Psoas muscle (tissue), 8 donors: ENCODE measurements at regions of chr4 and their contacts with region 1.

Region 1: GRCh38 chr4:113781439-113782040 is 20.0 kb upstream of the CAMK2D start:
- DNase-seq: no peak
- ATAC-seq: peak in 1 of 4 donors; percentile 49
- H3K4me3 ChIP-seq: no peak overlapping the region
- H3K27ac ChIP-seq: no peak overlapping the region
- H3K4me1 ChIP-seq: no peaks in the 10 kb centered on the region
- H3K27me3 ChIP-seq: no peaks in the 10 kb centered on the region
- CTCF ChIP-seq: peak; percentile 74

Region 2: DNA sequence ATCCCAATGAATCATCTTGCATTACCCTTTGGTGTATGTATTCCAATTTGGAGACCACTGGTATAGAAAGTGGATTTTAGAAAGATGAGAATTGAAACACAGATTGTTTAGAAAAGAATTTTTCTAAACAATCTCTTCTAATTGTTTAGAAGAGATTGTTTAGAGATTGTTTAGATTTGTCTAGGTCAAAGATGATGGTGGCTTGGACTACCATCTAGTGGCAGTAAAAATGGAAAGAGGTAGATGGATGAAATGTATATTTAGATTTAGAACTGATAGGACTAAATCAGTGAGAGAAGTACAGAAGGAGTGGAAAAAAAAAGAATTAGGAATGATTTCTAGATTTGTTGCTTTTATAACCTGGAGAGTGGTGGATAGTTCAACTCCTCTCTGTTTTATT is 127.3 kb after region 1 on chr4:
- intact Hi-C with region 1: loop called in 1 of 2 experiments (anchors 5 kb)
- DNase-seq: no peak
- ATAC-seq: no peak
- H3K4me3 ChIP-seq: no peak overlapping the region
- H3K27ac ChIP-seq: no peak overlapping the region
- H3K4me1 ChIP-seq: no peaks in the 10 kb centered on the region
- H3K27me3 ChIP-seq: no peaks in the 10 kb centered on the region
- CTCF ChIP-seq: peak; percentile 26

Region 3: GRCh38 chr4:114180481-114180880 is 398.9 kb after region 1 on chr4:
- intact Hi-C with region 1: loop called in 1 of 2 experiments (anchors 10 kb)
- DNase-seq: no peak
- ATAC-seq: peak in 2 of 4 donors; percentile 33 to 57
- H3K4me3 ChIP-seq: no peak overlapping the region
- H3K27ac ChIP-seq: no peak overlapping the region
- H3K4me1 ChIP-seq: no peaks in the 10 kb centered on the region
- H3K27me3 ChIP-seq: no peaks in the 10 kb centered on the region
- CTCF ChIP-seq: peak; percentile 29

Region 4: GRCh38 chr4:114839986-114840385 is 1058.4 kb after region 1 on chr4:
- intact Hi-C with region 1: no loop called
- DNase-seq: no peak
- ATAC-seq: no peak
- H3K4me3 ChIP-seq: no peak overlapping the region
- H3K27ac ChIP-seq: no peak overlapping the region
- H3K4me1 ChIP-seq: no peaks in the 10 kb centered on the region
- H3K27me3 ChIP-seq: peaks cover 0 to 2% (median 0%) of the 10 kb centered on the region in 3 donors
- CTCF ChIP-seq: no peak